ENCODE measurements at regions of chr13 and their contacts with region 1.

Region 1: DNA sequence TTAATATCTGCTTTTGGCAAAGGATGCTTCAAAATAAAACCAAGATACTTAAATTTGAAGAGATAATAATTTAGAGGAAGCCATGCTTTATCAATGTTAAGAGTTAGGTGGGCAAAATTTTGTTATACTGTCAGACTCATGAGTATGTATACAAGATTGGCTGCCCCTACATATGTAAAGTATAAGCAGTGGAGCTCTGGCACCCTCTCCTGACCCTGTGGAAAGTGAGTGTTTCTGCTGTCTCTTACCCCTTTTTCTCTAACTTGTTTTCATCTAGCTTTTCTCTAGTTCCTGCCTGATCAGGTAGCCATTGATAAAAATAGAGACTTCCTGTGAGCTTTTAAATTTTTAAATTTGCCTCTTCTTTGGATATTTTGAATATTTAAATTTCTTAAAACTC is 710.9 kb upstream of the SPRY2 start:
- DNase-seq: no peak
- H3K4me3 ChIP-seq: no peak overlapping the region
- H3K27ac ChIP-seq: no peak overlapping the region
- H3K4me1 ChIP-seq: peaks cover 6% of the 10 kb centered on the region
- H3K27me3 ChIP-seq: no peaks in the 10 kb centered on the region
- CTCF ChIP-seq: peak; percentile 4 to 31

Region 2: GRCh38 chr13:80979035-80979641 is 72.7 kb before region 1 on chr13:
- CTCF ChIA-PET with region 1: no interaction called
- dilution Hi-C with region 1: no loop called
- in situ Hi-C with region 1: no loop called
- intact Hi-C with region 1: loop called (anchors 2 kb)
- DNase-seq: peak; percentile 42
- H3K4me3 ChIP-seq: no peak overlapping the region
- H3K27ac ChIP-seq: no peak overlapping the region
- H3K4me1 ChIP-seq: no peaks in the 10 kb centered on the region
- H3K27me3 ChIP-seq: no peaks in the 10 kb centered on the region
- CTCF ChIP-seq: peak; percentile 86 to 91

Region 3: GRCh38 chr13:81089371-81090157 is 37.7 kb after region 1 on chr13:
- CTCF ChIA-PET with region 1: no interaction called
- dilution Hi-C with region 1: no loop called
- in situ Hi-C with region 1: no loop called
- intact Hi-C with region 1: no loop called
- DNase-seq: no peak
- H3K4me3 ChIP-seq: no peak overlapping the region
- H3K27ac ChIP-seq: no peak overlapping the region
- H3K4me1 ChIP-seq: no peaks in the 10 kb centered on the region
- H3K27me3 ChIP-seq: no peaks in the 10 kb centered on the region
- CTCF ChIP-seq: no peak

Region 4: DNA sequence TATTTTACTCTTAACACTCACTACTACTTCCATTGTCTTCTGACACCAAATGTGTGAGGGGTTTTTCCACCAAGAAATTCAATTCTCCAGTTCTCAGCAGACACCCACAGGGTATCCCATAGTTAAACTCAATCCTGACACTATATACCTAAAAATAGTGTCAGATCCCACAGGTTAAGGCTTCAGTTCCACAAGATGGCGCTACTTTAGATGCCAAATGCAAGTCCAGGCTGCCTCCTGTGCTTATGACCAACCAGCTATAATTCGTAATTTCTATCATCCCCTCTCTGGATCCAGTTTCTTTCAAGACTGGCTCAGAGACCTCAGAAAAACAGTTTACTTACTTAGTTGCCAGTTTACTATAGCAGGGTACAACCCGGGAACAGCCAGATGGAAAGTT is 435.3 kb after region 1 on chr13:
- CTCF ChIA-PET with region 1: no interaction called
- dilution Hi-C with region 1: no loop called
- in situ Hi-C with region 1: loop called in 1 of 2 experiments (anchors 25 kb)
- intact Hi-C with region 1: no loop called
- DNase-seq: peak; percentile 17
- H3K4me3 ChIP-seq: no peak overlapping the region
- H3K27ac ChIP-seq: no peak overlapping the region
- H3K4me1 ChIP-seq: no peaks in the 10 kb centered on the region
- H3K27me3 ChIP-seq: no peaks in the 10 kb centered on the region
- CTCF ChIP-seq: peak; percentile 45 to 62

Measured in mammary epithelial cell (primary cell).